SK-N-SH (cell line): ENCODE measurements at regions of chr7 and their contacts with region 1.

Region 1: DNA sequence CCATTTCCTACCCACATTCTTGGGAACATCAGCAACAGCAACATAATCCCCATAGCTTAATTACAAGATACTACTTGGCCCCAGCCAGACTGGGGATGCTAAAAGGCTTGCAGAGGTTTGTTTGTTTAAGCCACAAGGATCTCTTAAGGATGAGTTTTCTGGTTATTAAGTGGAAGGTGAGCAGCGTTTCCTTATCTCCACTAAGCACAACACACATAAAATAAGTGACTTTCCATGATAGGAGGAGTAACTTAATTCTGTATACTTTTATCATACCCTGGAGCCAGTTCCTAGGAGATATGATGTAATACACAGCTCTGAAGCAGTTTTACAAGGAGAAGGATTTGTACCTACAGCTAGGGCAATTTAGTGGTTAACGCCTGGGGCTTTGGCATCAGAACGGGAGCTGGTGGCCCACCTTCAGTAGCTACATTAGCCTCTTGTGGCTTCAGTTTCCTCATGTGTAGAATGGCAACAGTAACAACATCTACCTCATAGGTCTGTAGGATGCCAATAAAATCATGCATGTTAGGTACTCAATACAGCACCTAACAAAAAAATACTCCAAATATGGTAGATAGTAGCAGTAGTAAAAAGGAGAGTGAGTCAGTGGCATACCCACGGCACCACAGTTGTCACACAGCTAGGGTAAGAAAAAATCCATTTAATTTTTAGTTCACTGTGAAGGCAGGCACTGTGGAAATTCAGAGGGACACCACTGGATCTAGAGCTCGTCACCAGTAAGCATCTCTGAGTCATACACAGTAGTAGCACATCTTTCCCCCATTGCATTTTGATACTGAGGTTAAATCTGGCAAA is 55.2 kb downstream of the DOCK4 start:
- DNase-seq: no peak
- H3K4me3 ChIP-seq: no peak overlapping the region
- H3K27ac ChIP-seq: no peak overlapping the region
- H3K4me1 ChIP-seq: peaks cover 0 to 46% of the 10 kb centered on the region in 2 experiments; a peak in 2 of 4 replicates
- H3K27me3 ChIP-seq: no peaks in the 10 kb centered on the region
- CTCF ChIP-seq: no peak
- EP300 ChIP-seq: no peak
- RAD21 ChIP-seq: no peak

Region 2: GRCh38 chr7:111958896-111959295 is 192.1 kb before region 1 on chr7:
- CTCF ChIA-PET with region 1: no interaction called
- POLR2A ChIA-PET with region 1: no interaction called
- DNase-seq: peak; percentile 81
- H3K4me3 ChIP-seq: no peak overlapping the region; a peak in 1 of 4 replicates
- H3K27ac ChIP-seq: peak overlapping the region in 1 of 2 experiments; percentile 100; a peak in 2 of 4 replicates
- H3K4me1 ChIP-seq: peaks cover 0 to 49% of the 10 kb centered on the region in 2 experiments; a peak in 2 of 4 replicates
- H3K27me3 ChIP-seq: no peaks in the 10 kb centered on the region
- CTCF ChIP-seq: no peak
- EP300 ChIP-seq: peak in 1 of 2 experiments; percentile 95; a peak in 2 of 4 replicates
- RAD21 ChIP-seq: peak; percentile 24; the same call in 1 of the 2 replicates

Region 3: DNA sequence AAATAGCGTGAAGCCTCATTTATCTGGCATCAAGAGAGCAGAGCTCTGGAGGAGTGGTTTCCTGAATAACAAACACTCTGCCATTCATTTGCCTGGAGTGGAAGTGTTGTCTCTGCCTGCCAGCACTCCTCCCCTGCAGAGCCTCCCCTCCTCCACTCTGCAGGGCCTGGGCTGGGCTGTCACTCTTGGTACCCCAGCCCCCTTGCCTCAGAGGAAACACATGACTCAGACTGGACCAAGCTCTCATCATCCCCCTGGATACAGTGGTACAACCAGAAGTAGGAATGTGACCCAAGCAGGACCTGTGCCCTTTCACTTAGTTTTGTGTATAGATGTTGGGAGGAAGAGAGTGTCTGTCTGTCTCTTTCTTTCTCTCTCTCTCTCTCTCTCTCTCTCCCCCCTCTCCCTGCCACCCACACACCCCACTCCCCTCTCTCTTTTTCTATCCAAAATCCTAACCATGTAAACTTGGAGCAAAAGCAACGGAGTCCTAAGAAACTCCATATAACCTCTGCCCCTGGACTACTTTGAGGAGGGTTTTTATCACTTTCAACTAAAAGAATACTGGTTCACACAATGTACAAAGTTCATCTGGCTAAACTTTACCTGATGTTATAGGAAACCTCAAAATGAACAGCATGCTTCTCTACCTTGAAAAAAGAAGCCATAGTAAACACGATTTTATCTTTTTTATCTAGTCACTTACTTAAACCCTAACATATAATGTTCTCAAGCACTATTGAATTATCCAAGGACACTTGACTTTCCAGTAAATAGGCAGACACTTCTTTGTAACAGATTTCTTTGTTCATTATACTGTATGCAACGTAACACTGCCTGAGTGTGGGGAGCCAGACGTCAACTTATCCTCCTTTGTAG is 11.3 kb after region 1 on chr7:
- CTCF ChIA-PET with region 1: interaction called, 17 read pairs
- POLR2A ChIA-PET with region 1: no interaction called
- DNase-seq: peak; percentile 54
- H3K4me3 ChIP-seq: no peak overlapping the region
- H3K27ac ChIP-seq: peak overlapping the region in 1 of 2 experiments; percentile 80; a peak in 1 of 4 replicates
- H3K4me1 ChIP-seq: peaks cover 29 to 49% of the 10 kb centered on the region in 2 experiments
- H3K27me3 ChIP-seq: no peaks in the 10 kb centered on the region
- CTCF ChIP-seq: no peak
- EP300 ChIP-seq: peak; percentile 16 to 61; a peak in 3 of 4 replicates
- RAD21 ChIP-seq: peak; percentile 29; the same call in 1 of the 2 replicates